ENCODE measurements at regions of chr7 and their contacts with region 1.

Region 1: DNA sequence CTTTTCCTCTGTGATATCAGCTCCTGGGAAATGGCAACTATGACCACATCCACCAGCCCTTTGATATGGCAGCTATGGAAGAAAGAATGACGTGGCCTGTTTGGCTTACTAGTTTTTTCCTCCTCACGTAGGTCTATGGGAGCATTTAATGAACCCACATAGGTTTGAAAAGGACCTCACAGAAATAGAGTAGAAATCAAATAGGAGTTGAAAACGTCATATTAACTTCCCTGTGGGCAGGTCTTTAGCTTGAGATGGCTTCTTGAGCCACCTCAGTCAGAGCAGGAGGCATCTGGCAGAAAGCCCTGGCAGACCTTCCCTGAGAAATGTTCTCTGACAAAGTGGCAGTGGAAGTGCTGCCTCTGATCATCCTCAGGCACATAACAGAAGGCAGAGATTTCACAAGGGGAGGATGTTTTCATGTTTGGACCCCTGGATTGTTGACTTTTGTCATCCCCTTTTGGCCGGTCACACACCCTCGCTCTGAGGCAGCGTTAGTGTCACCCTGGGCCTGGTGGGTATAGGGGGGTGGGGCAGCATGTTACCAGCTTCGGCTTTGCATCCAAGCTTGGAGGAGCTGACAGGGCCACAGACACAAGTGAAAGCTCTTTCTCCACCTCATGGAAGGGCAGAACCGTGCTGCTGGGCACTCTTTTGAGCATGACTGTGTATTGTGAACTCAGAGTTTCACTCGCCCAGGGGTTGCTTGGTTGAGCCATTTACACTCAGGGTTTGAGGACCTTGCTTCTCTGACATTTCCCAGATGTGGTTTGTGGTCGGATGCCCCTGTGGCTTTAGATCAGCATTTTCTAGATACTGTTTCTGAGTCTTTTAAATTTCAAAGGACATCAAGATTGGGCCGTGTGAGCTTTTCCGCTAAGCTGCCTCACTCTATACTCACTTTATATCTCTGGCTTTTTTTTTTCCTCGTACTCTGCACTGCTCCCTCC is 184.2 kb downstream of the STK31 start:
- DNase-seq: peak; percentile 52
- H3K4me3 Mint-ChIP-seq: peak overlapping the region; percentile 34
- H3K27ac Mint-ChIP-seq: peak overlapping the region; percentile 91
- H3K4me1 Mint-ChIP-seq: peaks cover 36% of the 10 kb centered on the region
- H3K27me3 Mint-ChIP-seq: peaks cover 16% of the 10 kb centered on the region

Region 2: DNA sequence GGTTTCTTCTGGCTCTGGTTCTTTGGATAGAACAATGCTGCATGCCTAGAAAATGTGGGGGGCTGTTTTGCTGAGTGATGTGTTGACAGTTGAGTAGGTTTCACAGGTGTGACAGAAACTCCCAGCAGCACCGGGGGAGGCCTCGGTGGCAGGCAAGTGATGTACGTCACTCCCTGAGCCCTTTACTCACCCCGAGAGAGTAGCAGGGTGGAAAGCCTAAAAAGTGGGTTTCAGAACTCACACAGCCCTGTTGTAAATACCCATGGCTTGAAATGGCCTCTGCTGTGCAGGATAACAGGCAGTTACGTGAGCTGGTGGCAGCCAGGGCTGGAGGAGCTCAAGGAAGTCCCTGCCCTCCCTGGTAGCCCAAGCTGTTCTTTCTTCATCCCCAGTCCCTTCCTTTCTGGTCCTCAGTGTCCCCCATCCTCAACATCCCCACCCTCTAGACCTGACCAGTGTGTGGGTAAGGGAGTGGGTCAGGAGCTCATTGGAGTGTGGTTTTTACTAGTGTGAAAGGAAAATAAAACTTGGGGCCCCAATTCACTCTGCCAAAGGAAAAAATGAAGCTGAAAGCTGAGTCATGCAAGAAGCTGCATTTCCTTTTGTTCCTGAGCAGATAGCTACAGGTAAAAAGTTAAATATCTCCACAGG is 73.9 kb after region 1 on chr7:
- intact Hi-C with region 1: loop called (anchors 1 kb)
- DNase-seq: no peak
- H3K4me3 Mint-ChIP-seq: no peak overlapping the region
- H3K27ac Mint-ChIP-seq: peak overlapping the region; percentile 51
- H3K4me1 Mint-ChIP-seq: peaks cover 13% of the 10 kb centered on the region
- H3K27me3 Mint-ChIP-seq: no peaks in the 10 kb centered on the region